ENCODE measurements at regions of chr7 and their contacts with region 1.

Region 1: GRCh38 chr7:78020136-78020873 is 221.7 kb downstream of the PHTF2 start:
- DNase-seq: no peak
- ATAC-seq: peak; percentile 79

Region 2: GRCh38 chr7:77958436-77958835 is 61.9 kb before region 1 on chr7:
- intact Hi-C with region 1: no loop called
- DNase-seq: no peak
- ATAC-seq: no peak

Region 3: DNA sequence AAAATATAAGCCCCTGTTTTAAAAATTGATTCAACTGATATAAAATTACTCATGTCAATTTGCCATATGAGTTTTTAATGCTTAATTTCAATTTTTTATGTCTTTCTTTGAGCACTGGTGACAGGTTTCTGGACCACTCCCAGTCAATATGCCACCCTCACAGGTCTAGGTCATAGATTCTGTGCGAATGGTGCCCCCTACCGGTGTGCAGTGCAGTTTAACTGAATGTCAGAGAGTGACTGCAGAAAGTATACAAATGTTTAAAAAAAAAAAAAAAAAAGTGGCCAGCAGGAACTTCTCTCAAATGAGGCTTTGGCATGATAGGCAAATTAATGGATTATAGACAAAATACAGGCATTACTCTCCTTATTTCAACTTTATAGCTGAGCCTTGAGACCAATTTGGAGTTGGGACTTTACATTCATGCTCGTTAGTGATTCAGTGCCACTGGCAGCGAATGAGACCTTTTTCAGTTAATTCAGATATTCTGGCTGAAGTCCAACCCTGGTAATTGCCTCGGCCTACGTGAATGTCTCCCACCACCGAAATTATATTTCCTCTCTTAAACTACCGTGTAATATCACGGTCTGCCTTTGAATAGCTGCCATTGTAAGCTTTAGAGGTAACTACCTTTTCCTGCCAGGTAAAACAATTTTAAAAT is 205.9 kb after region 1 on chr7:
- intact Hi-C with region 1: loop called (anchors 5 kb)
- DNase-seq: no peak
- ATAC-seq: no peak

Region 4: GRCh38 chr7:78489476-78490240 is 469.4 kb after region 1 on chr7:
- intact Hi-C with region 1: loop called (anchors 10 kb)
- DNase-seq: no peak
- ATAC-seq: no peak

Measured in Right ventricle myocardium inferior (tissue), 1 donor.